A673 (cell line): ENCODE measurements at regions of chr1 and their contacts with region 1.

Region 1: DNA sequence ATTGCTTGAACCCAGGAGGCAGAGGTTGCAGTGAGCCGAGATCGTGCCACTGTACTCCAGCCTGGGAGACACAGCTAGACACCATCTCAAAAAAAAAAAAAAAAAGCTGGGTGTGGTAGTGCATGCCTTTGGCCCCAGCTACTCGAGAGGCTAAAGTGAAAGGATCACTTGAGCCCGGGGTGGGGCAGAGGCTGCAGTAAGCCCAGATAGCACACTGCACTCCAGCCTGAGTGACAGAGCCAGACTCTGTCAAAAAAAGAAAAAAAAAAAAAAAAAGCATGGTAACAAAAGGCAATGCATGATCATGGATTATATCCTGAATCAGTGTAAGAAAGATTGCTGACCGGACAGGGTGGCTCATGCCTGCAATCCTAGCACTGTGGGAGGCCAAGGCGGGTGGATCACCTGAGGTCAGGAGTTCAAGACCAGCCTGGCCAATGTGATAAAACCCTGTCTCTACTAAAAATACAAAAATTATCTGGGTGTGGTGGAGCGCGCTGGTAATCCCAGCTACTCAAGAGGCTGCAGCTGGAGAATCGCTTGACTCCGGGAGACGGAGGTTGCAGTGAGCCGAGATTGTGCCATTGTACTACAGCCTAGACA is 76.3 kb downstream of the RUSC1 start:
- DNase-seq: no peak
- H3K4me3 ChIP-seq: no peak overlapping the region
- H3K27ac ChIP-seq: no peak overlapping the region
- H3K4me1 ChIP-seq: peaks cover 3% of the 10 kb centered on the region
- H3K27me3 ChIP-seq: no peaks in the 10 kb centered on the region
- CTCF ChIP-seq: no peak

Region 2: GRCh38 chr1:155352631-155353030 is 44.3 kb before region 1 on chr1:
- CTCF ChIA-PET with region 1: no interaction called
- POLR2A ChIA-PET with region 1: no interaction called
- intact Hi-C with region 1: loop called (anchors 5 kb)
- DNase-seq: no peak
- H3K4me3 ChIP-seq: no peak overlapping the region
- H3K27ac ChIP-seq: no peak overlapping the region
- H3K4me1 ChIP-seq: no peaks in the 10 kb centered on the region
- H3K27me3 ChIP-seq: no peaks in the 10 kb centered on the region
- CTCF ChIP-seq: no peak

Region 3: GRCh38 chr1:155893389-155894142 is 496.6 kb after region 1 on chr1:
- CTCF ChIA-PET with region 1: no interaction called
- POLR2A ChIA-PET with region 1: no interaction called
- intact Hi-C with region 1: no loop called
- DNase-seq: peak; percentile 89
- H3K4me3 ChIP-seq: no peak overlapping the region
- H3K27ac ChIP-seq: peak overlapping the region; percentile 70
- H3K4me1 ChIP-seq: peaks cover 18% of the 10 kb centered on the region
- H3K27me3 ChIP-seq: no peaks in the 10 kb centered on the region
- CTCF ChIP-seq: no peak